A549 (cell line): ENCODE measurements at regions of chr16 and their contacts with region 1.

Region 1: GRCh38 chr16:4288148-4288921 is 15.5 kb upstream of the TFAP4 start:
- DNase-seq: peak; percentile 74 to 86
- ATAC-seq: peak; percentile 83 to 85
- H3K4me3 ChIP-seq: no peak overlapping the region
- H3K27ac ChIP-seq: peak overlapping the region; percentile 50 to 86
- H3K4me1 ChIP-seq: peaks cover 60% of the 10 kb centered on the region
- CTCF ChIP-seq: peak; percentile 97
- EP300 ChIP-seq: no peak
- POLR2A ChIP-seq: no peak
- RAD21 ChIP-seq: peak; percentile 93 to 97

Region 2: DNA sequence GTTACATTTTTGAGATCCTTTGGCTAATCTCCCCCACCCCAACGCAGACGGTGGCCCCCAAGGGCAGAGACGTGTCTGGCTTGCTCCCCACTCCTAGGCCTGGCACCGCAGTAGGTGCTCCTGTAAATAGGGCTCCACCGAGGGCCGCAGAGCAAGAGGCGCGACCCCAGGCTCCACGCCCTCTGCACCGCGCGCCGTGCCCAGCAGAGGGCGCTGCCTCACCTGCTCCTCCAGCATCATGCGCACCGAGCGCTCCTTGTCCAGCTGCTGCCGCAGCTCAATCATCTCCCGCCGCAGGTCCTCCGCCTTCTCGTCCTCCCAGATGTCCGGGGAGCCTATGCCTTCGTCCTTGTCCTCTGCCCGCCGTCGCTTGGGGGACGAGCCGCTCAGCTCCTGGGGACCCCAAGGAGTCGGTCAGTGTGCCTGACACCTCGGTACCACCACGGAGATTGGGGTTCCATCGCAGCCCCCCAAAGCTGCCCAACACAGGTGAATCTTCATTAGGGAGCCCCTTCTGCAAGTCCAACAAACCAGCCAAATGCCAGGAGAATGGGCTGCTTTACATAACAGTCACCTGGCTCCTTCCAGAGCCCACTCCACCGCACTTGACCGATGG is 26.7 kb before region 1 on chr16:
- CTCF ChIA-PET with region 1: interaction called, 13 read pairs
- POLR2A ChIA-PET with region 1: no interaction called
- DNase-seq: peak; percentile 54 to 78
- ATAC-seq: peak; percentile 55 to 81; a peak in 5 of 6 replicates
- H3K4me3 ChIP-seq: no peak overlapping the region
- H3K27ac ChIP-seq: no peak overlapping the region
- H3K4me1 ChIP-seq: peaks cover 9% of the 10 kb centered on the region; the same call in 1 of the 3 replicates
- CTCF ChIP-seq: peak; percentile 69
- EP300 ChIP-seq: no peak
- POLR2A ChIP-seq: no peak
- RAD21 ChIP-seq: peak; percentile 64 to 67

Region 3: GRCh38 chr16:4277987-4278513 is 10.3 kb before region 1 on chr16:
- CTCF ChIA-PET with region 1: interaction called, 152 read pairs
- POLR2A ChIA-PET with region 1: interaction called, 11 read pairs
- DNase-seq: no peak
- ATAC-seq: no peak
- H3K4me3 ChIP-seq: no peak overlapping the region
- H3K27ac ChIP-seq: peak overlapping the region in 1 of 2 experiments; percentile 74; a peak in 3 of 6 replicates
- H3K4me1 ChIP-seq: peaks cover 12% of the 10 kb centered on the region
- CTCF ChIP-seq: no peak
- EP300 ChIP-seq: no peak
- POLR2A ChIP-seq: no peak
- RAD21 ChIP-seq: no peak

Region 4: GRCh38 chr16:4307215-4308037 is 19.1 kb after region 1 on chr16:
- CTCF ChIA-PET with region 1: interaction called, 213 read pairs
- POLR2A ChIA-PET with region 1: interaction called, 8 read pairs
- DNase-seq: peak; percentile 87 to 96
- ATAC-seq: peak; percentile 86 to 87
- H3K4me3 ChIP-seq: peak overlapping the region; percentile 88
- H3K27ac ChIP-seq: peak overlapping the region; percentile 90 to 93
- H3K4me1 ChIP-seq: peaks cover 35% of the 10 kb centered on the region
- CTCF ChIP-seq: no peak
- EP300 ChIP-seq: peak in 1 of 2 experiments; percentile 61; a peak in 1 of 5 replicates
- POLR2A ChIP-seq: peak; percentile 53
- RAD21 ChIP-seq: no peak; a peak in 1 of 5 replicates

Region 5: DNA sequence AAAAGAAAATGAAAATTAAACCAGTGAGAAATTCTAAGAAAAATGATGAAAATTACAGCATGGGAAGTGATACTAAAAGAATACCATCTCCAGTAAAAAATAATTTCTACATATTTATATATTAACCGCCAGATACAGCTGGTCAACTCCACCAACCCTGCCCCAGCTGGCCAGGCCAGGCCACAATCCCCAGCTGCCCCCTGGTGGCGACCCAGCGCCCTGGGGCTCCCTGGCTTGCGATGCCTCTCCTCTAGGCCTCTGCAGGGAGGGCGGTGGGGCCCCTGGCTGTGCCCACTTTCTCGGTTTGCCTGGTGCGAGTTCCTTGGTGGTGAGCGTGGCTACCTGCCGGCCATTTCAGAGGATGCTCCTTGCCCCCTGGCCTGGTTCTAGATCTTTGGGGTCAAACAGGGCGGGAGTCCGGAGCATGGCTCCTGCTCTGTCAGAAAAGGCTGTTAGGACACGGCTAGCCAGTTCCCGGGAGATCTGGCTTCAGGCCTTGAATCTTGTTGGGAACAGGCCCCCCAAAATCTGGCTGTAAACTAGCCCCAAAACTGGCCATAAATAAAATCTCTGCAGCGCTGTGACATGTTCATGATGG is 42.0 kb after region 1 on chr16:
- CTCF ChIA-PET with region 1: interaction called, 81 read pairs
- POLR2A ChIA-PET with region 1: interaction called, 3 read pairs
- DNase-seq: peak; percentile 72 to 77
- ATAC-seq: peak; percentile 84 to 90
- H3K4me3 ChIP-seq: no peak overlapping the region
- H3K27ac ChIP-seq: peak overlapping the region in 1 of 2 experiments; percentile 87; a peak in 1 of 6 replicates
- H3K4me1 ChIP-seq: peaks cover 44% of the 10 kb centered on the region
- CTCF ChIP-seq: peak; percentile 92
- EP300 ChIP-seq: no peak
- POLR2A ChIP-seq: no peak
- RAD21 ChIP-seq: peak; percentile 94 to 97